GM13977 (cell line): ENCODE measurements at regions of chrX and their contacts with region 1.

Region 1: GRCh38 chrX:152958524-152959465 is 35.1 kb downstream of the PNMA5 start:
- DNase-seq: peak; percentile 83
- CTCF ChIP-seq: peak; percentile 88

Region 2: DNA sequence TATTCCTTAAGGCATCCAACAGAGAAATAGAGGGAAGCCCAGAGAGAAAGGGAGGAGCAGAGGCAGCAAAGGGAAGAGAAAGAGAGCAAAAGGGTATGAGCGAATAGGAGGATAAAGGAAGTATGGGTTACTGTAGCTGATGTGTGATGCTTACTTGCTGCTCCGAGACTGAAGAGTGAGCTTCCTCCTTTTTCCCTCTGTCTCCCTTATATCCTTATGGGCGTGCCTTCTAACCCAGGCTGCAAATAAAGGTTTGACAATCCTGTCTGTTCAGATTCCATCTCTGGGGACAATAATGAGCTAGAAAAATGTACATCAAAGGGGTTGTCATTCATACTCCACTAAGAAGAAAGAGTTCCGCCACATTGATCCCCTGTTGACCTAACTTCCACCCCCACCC is 507.2 kb before region 1 on chrX:
- in situ Hi-C with region 1: no loop called
- DNase-seq: no peak
- CTCF ChIP-seq: no peak

Region 3: GRCh38 chrX:152821145-152821765 is 137.5 kb before region 1 on chrX:
- in situ Hi-C with region 1: no loop called
- DNase-seq: no peak
- CTCF ChIP-seq: peak; percentile 58

Region 4: DNA sequence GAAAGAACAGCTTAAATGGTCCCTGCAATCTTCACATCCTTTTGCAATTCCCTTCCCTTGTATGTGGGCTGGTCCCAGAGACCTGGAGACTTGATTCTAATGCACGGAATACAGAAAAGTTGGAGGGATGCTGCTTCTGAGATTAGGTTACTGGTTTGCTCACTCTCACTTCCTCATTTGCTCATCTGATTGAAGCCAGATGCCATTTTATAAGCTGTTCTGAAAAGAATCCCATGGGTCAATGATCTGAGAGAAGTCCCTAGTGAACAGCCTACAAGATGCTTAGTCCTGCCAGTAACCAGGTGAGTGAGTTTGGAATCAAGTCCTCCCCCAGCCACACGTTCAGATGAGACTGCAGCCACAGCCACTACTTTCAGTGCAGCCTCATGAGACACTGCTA is 256.1 kb after region 1 on chrX:
- in situ Hi-C with region 1: no loop called
- DNase-seq: no peak
- CTCF ChIP-seq: no peak

Region 5: GRCh38 chrX:153667956-153668396 is 709.2 kb after region 1 on chrX:
- in situ Hi-C with region 1: loop called (anchors 25 kb)
- DNase-seq: peak; percentile 85
- CTCF ChIP-seq: peak; percentile 75

Region 6: DNA sequence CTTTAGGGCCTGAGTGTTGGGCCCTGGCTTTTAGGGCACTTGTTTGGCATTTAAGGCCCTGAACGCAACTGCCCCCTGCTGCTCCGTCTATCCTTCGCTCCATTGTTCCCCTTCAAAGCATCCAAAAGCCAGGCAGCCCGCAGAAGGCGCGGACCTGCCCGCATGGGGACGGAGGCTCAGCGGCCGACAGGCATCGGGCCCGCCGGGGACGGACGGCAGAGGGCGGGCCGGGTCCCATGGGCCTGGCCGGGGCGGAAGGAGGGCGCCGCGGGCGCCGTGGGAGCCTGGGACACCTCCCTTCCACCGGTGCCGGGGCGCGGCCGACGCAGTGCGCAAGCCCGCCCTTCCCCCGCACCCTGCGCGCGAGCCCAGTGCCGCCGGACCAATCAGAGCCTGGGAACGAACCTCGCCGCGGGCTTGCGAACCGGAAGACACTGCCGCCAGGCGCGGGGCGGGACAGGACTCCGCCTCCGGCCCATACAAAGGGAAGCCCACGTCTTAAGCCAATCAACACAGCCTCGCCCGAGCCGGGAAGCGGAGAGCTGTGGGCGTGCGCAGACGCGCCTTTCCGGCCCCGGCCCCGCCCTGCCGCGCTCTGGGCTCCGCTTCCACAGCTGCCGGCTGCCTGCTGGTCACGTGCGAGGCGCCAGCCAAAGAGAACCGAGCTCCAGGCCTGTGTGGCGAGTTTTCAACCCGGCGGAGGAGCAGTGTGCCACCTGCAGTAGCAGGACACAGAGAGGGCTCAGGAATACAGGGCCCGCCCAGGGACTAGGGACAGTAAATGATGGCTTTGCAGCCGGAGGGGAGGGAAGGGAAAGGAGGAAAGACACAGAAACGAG is 969.3 kb after region 1 on chrX:
- in situ Hi-C with region 1: loop called (anchors 25 kb)
- DNase-seq: peak; percentile 96
- CTCF ChIP-seq: peak; percentile 18